Activated naive CD4-positive, alpha-beta T cell treated with anti-CD3 and anti-CD28 coated beads for 36 hours (primary cell): ENCODE measurements at regions of chr5 and their contacts with region 1.

Region 1: DNA sequence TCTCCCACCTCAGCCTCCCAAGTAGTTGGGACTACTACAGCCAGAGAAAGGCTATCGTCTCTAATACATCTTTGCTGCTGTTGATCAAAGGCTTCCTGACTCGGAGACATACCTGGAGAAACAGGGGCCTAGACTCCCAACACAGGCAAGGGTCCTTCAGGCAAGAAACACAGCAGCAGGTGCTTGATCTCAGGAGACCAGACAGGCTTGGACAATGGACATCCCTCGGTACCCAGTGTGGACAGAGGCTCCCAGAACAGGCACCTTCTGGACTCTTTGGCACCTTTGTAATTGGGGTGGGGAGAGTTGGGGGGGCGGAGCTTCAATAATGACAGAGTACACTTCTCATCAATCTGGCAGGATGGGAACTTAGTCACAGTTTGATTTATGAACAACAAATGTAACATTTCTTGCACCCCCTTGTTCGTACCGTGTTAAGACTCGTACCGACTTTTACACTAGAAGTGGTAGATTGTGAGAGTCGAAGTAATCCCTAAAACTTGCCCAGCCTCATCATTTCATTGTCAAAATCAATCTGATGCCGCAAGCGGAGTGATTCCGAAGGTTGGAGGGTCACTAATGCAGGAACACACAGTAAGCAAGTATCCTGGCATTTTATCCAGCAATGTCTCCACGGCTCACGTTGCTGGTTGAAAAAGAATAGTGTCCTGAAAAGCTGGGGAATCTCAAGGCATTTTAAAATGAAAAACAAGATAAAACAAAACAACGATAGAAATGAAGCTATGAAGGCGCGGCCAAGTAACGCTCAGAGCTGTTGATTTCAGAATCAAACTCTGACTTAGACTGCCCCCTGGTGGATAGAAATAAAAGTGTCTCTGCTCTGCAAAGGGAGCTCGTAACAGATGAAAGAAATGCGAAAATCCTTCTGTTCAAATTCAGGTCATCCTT is 46.4 kb upstream of the STK32A start:
- DNase-seq: peak; percentile 61
- H3K4me3 Mint-ChIP-seq: no peak overlapping the region
- H3K27ac Mint-ChIP-seq: no peak overlapping the region
- H3K4me1 Mint-ChIP-seq: no peaks in the 10 kb centered on the region
- H3K27me3 Mint-ChIP-seq: peaks cover 3% of the 10 kb centered on the region

Region 2: GRCh38 chr5:146533260-146533857 is 655.1 kb before region 1 on chr5:
- CTCF ChIA-PET with region 1: interaction called, 19 read pairs
- intact Hi-C with region 1: loop called (anchors 1 kb)
- DNase-seq: peak; percentile 90
- H3K4me3 Mint-ChIP-seq: no peak overlapping the region
- H3K27ac Mint-ChIP-seq: no peak overlapping the region
- H3K4me1 Mint-ChIP-seq: peaks cover 3% of the 10 kb centered on the region
- H3K27me3 Mint-ChIP-seq: no peaks in the 10 kb centered on the region

Region 3: DNA sequence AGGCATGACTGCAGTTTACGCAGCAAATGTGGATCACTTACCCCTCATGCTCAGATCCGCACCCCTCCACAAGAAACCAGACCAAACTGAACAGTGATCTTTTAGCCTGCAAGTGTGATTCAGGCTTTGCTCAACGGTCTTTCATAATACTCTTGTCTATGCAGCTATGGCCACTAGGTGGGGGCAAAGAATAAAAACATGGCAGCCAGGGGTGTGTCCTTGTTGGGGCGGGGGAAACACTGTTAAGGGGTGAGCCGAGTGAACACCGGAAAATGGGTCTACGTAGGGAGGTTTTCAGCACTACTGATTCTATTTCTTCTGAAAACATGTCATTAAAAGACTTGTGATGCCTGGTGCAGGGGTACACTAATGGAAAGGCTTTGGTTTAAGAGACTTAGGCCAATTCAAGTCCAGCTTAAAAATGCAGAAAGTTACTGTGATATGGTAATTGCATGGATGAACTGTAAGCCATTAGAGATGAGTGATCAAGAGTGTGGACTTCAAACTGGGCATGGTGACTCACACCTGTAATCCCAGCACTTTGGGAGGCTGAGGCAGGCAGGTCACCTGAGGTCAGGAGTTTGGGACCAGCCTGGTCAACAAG is 622.6 kb before region 1 on chr5:
- CTCF ChIA-PET with region 1: interaction called, 9 read pairs
- intact Hi-C with region 1: loop called (anchors 1 kb)
- DNase-seq: peak; percentile 73
- H3K4me3 Mint-ChIP-seq: no peak overlapping the region
- H3K27ac Mint-ChIP-seq: no peak overlapping the region
- H3K4me1 Mint-ChIP-seq: peaks cover 4% of the 10 kb centered on the region
- H3K27me3 Mint-ChIP-seq: no peaks in the 10 kb centered on the region

Region 4: GRCh38 chr5:146965761-146966659 is 222.4 kb before region 1 on chr5:
- CTCF ChIA-PET with region 1: interaction called, 17 read pairs
- intact Hi-C with region 1: loop called (anchors 1 kb)
- DNase-seq: peak; percentile 65
- H3K4me3 Mint-ChIP-seq: no peak overlapping the region
- H3K27ac Mint-ChIP-seq: no peak overlapping the region
- H3K4me1 Mint-ChIP-seq: peaks cover 3% of the 10 kb centered on the region
- H3K27me3 Mint-ChIP-seq: no peaks in the 10 kb centered on the region

Region 5: GRCh38 chr5:147200001-147200400 is 11.5 kb after region 1 on chr5:
- CTCF ChIA-PET with region 1: interaction called, 20 read pairs
- intact Hi-C with region 1: no loop called
- DNase-seq: no peak
- H3K4me3 Mint-ChIP-seq: no peak overlapping the region
- H3K27ac Mint-ChIP-seq: no peak overlapping the region
- H3K4me1 Mint-ChIP-seq: no peaks in the 10 kb centered on the region
- H3K27me3 Mint-ChIP-seq: peaks cover 3% of the 10 kb centered on the region

Region 6: GRCh38 chr5:147530530-147531389 is 342.3 kb after region 1 on chr5:
- CTCF ChIA-PET with region 1: no interaction called
- intact Hi-C with region 1: no loop called
- DNase-seq: no peak
- H3K4me3 Mint-ChIP-seq: no peak overlapping the region
- H3K27ac Mint-ChIP-seq: no peak overlapping the region
- H3K4me1 Mint-ChIP-seq: no peaks in the 10 kb centered on the region
- H3K27me3 Mint-ChIP-seq: no peaks in the 10 kb centered on the region